CD4-positive, alpha-beta memory T cell (primary cell): ENCODE measurements at regions of chr22 and their contacts with region 1.

Region 1: DNA sequence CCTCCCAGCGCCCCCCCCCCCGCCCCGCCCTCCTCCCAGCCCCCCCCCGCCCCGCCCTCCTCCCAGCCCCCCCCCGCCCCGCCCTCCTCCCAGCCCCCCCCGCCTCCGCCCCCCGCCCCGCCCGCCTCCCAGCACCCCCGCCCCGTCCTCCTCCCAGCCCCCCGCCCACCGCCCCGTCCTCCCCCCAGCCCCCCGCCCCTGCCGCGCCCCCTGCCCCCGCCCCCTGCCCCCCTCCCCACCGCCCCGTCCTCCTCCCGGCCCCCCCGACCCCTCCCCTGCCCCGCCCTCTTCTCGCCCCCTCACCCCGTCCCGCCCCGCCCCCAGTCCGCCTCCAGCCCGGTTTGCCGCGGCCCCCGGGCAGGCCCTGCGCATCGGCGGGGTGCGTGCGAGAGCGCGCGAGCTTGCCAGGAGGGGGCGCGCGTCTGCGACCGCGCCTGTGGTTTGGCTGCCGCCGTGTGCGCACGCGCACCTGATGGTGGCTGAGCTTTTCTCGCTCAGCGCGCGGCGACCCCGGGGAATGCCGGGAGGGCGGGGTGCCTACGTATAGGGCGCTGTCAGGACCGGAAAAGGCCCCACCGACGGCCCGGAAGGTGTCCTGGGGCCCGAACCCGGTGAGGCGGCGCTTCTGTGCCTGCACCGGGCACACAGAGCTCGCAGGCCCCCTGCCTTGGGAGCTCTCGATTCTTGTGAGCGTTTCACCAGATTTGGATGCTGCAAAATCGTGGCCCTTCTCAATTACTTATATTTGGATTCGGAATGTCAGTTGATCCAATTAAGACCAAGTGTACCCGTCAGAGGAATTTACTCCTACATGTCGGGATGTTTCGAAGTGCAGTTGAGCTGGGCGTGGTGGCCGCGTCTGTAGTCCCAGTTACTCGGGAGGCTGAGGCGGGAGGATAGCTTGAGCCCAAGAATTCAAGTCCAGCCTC is 501 bp upstream of the TTLL12 start:
- DNase-seq: peak; percentile 94 to 97 (median 97)
- H3K4me3 ChIP-seq: peak overlapping the region; percentile 39 to 58
- H3K4me3 Mint-ChIP-seq: peak overlapping the region; percentile 82 to 87 (median 83)
- H3K27ac ChIP-seq: peak overlapping the region; percentile 96
- H3K27ac Mint-ChIP-seq: peak overlapping the region; percentile 96 to 99 (median 98)
- H3K4me1 ChIP-seq: peaks cover 24% of the 10 kb centered on the region
- H3K4me1 Mint-ChIP-seq: peaks cover 4 to 44% (median 18%) of the 10 kb centered on the region in 4 donors
- H3K27me3 ChIP-seq: no peaks in the 10 kb centered on the region
- H3K27me3 Mint-ChIP-seq: peaks cover 0 to 3% of the 10 kb centered on the region in 2 donors

Region 2: GRCh38 chr22:42856865-42857704 is 330.4 kb before region 1 on chr22 and contains the start of gene ARFGAP3:
- CTCF ChIA-PET with region 1: no interaction called
- POLR2A ChIA-PET with region 1: interaction called, 7 read pairs
- intact Hi-C with region 1: loop called (anchors 2 kb)
- DNase-seq: peak; percentile 90 to 99 (median 96)
- H3K4me3 ChIP-seq: peak within 1 kb of the TSS; percentile 81 to 91
- H3K4me3 Mint-ChIP-seq: peak within 1 kb of the TSS; percentile 82 to 91 (median 88)
- H3K27ac ChIP-seq: peak within 1 kb of the TSS; percentile 71
- H3K27ac Mint-ChIP-seq: peak within 1 kb of the TSS; percentile 88 to 95 (median 91)
- H3K4me1 ChIP-seq: peaks cover 18% of the 10 kb centered on the region
- H3K4me1 Mint-ChIP-seq: peaks cover 9 to 27% (median 16%) of the 10 kb centered on the region in 4 donors
- H3K27me3 ChIP-seq: no peaks in the 10 kb centered on the region
- H3K27me3 Mint-ChIP-seq: no peaks in the 10 kb centered on the region
- total RNA-seq, gene ARFGAP3: 44.7 to 45.7 TPM

Region 3: GRCh38 chr22:43088979-43089717 is 98.3 kb before region 1 on chr22 and contains the start of gene TTLL1:
- CTCF ChIA-PET with region 1: no interaction called
- POLR2A ChIA-PET with region 1: interaction called, 3 read pairs
- intact Hi-C with region 1: loop called (anchors 1 kb)
- DNase-seq: peak; percentile 86 to 89 (median 88)
- H3K4me3 ChIP-seq: peak within 1 kb of the TSS; percentile 41 to 91
- H3K4me3 Mint-ChIP-seq: peak within 1 kb of the TSS; percentile 85 to 96 (median 92)
- H3K27ac ChIP-seq: peak within 1 kb of the TSS; percentile 27
- H3K27ac Mint-ChIP-seq: peak within 1 kb of the TSS; percentile 75 to 92 (median 89)
- H3K4me1 ChIP-seq: peaks cover 13% of the 10 kb centered on the region
- H3K4me1 Mint-ChIP-seq: peaks cover 8 to 26% (median 18%) of the 10 kb centered on the region in 4 donors
- H3K27me3 ChIP-seq: no peaks in the 10 kb centered on the region
- H3K27me3 Mint-ChIP-seq: no peaks in the 10 kb centered on the region
- total RNA-seq, gene TTLL1: 6.4 to 7.8 TPM

Region 4: DNA sequence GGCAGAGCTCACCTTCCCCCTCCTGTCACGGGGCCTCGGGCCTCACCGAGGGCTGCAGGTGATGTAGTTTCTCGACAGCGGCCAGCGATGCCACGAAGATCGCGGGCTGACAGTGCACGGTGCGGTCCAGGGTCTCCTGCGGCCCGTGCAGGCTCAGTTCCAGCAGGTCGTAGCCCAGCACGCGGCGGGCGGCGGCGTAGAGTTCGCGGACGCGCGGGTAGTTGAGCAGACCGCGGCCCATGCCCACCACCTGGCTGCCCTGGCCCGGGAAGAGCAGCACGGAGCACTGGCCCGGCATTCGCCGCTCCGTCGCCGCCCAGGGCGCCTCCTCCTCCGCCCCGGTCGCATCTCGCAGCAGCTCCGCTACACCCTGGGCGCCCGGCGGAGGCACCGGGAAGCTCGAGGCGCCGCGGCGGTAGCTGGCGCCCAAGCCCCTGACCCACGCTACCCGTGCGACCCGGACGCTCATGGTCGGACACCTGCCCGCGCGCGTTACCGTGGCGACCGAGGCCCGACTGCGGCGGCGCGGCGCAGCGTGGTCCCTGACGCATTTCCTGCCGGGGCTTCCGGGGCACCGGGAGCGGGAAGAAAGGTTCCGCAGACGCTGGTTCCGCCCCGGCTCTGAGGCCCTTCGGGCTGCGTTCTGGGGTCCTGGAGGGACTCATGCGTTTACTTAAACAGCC is 44.4 kb before region 1 on chr22 and contains the start of gene MCAT:
- CTCF ChIA-PET with region 1: interaction called, 7 read pairs
- POLR2A ChIA-PET with region 1: interaction called, 27 read pairs
- intact Hi-C with region 1: loop called (anchors 1 kb)
- DNase-seq: peak; percentile 71 to 82 (median 78)
- H3K4me3 ChIP-seq: peak within 1 kb of the TSS; percentile 14 to 72
- H3K4me3 Mint-ChIP-seq: peak within 1 kb of the TSS; percentile 85 to 89 (median 87)
- H3K27ac ChIP-seq: peak within 1 kb of the TSS; percentile 71
- H3K27ac Mint-ChIP-seq: peak within 1 kb of the TSS; percentile 85 to 97 (median 93)
- H3K4me1 ChIP-seq: peaks cover 22% of the 10 kb centered on the region
- H3K4me1 Mint-ChIP-seq: peaks cover 3 to 26% (median 12%) of the 10 kb centered on the region in 4 donors
- H3K27me3 ChIP-seq: no peaks in the 10 kb centered on the region
- H3K27me3 Mint-ChIP-seq: no peaks in the 10 kb centered on the region
- total RNA-seq, gene MCAT: 7.9 to 9.0 TPM

Region 5: GRCh38 chr22:43263645-43264514 is 76.4 kb after region 1 on chr22:
- CTCF ChIA-PET with region 1: no interaction called
- POLR2A ChIA-PET with region 1: interaction called, 13 read pairs
- intact Hi-C with region 1: no loop called
- DNase-seq: peak; percentile 73 to 96 (median 77)
- H3K4me3 ChIP-seq: peak overlapping the region; percentile 5 to 50
- H3K4me3 Mint-ChIP-seq: peak overlapping the region; percentile 72 to 90 (median 85)
- H3K27ac ChIP-seq: peak overlapping the region; percentile 65
- H3K27ac Mint-ChIP-seq: peak overlapping the region; percentile 90 to 97 (median 94)
- H3K4me1 ChIP-seq: peaks cover 27% of the 10 kb centered on the region
- H3K4me1 Mint-ChIP-seq: peaks cover 20 to 38% (median 28%) of the 10 kb centered on the region in 4 donors
- H3K27me3 ChIP-seq: no peaks in the 10 kb centered on the region
- H3K27me3 Mint-ChIP-seq: no peaks in the 10 kb centered on the region

Region 6: GRCh38 chr22:44701824-44702478 is 1514.5 kb after region 1 on chr22 and contains the start of gene PRR5:
- CTCF ChIA-PET with region 1: no interaction called
- POLR2A ChIA-PET with region 1: no interaction called
- intact Hi-C with region 1: loop called (anchors 5 kb)
- DNase-seq: peak; percentile 83 to 89 (median 86)
- H3K4me3 ChIP-seq: peak within 1 kb of the TSS in 1 of 2 donors; percentile 47
- H3K4me3 Mint-ChIP-seq: peak within 1 kb of the TSS; percentile 71 to 87 (median 78)
- H3K27ac ChIP-seq: peak within 1 kb of the TSS; percentile 42
- H3K27ac Mint-ChIP-seq: peak within 1 kb of the TSS; percentile 84 to 95 (median 91)
- H3K4me1 ChIP-seq: peaks cover 27% of the 10 kb centered on the region
- H3K4me1 Mint-ChIP-seq: peaks cover 6 to 40% (median 21%) of the 10 kb centered on the region in 4 donors
- H3K27me3 ChIP-seq: no peaks in the 10 kb centered on the region
- H3K27me3 Mint-ChIP-seq: no peaks in the 10 kb centered on the region
- total RNA-seq, gene PRR5: 45.9 to 46.5 TPM